MCF 10A (cell line): ENCODE measurements at regions of chr1 and their contacts with region 1.

Region 1: DNA sequence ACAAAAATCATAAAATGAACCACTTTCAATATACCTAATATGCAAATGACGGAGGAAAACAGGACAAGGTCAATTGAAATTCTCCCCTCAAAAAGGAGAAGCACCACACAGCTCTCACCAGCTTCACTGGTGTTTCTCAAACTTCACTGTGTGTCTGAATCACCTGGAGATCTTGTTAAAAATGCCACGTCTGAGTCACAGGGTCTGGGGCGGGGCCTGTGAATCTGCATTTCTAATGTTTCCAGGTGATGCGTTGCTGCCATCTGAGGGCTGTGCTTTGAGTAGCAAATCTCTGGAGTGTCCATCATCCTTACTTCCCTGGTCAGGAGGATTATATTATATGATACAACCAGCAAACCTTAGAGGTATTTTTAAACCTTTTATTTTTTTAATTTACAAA is 9.0 kb downstream of the CLDN19 start:
- DNase-seq: peak; percentile 62
- H3K4me3 Mint-ChIP-seq: no peak overlapping the region
- H3K27ac Mint-ChIP-seq: no peak overlapping the region
- H3K4me1 Mint-ChIP-seq: no peaks in the 10 kb centered on the region
- H3K27me3 Mint-ChIP-seq: no peaks in the 10 kb centered on the region
- CTCF ChIP-seq: peak; percentile 45

Region 2: GRCh38 chr1:42576935-42577334 is 154.1 kb before region 1 on chr1:
- CTCF ChIA-PET with region 1: interaction called, 3 read pairs
- POLR2A ChIA-PET with region 1: no interaction called
- intact Hi-C with region 1: loop called (anchors 1 kb)
- DNase-seq: no peak
- H3K4me3 Mint-ChIP-seq: no peak overlapping the region
- H3K27ac Mint-ChIP-seq: no peak overlapping the region
- H3K4me1 Mint-ChIP-seq: no peaks in the 10 kb centered on the region
- H3K27me3 Mint-ChIP-seq: no peaks in the 10 kb centered on the region
- CTCF ChIP-seq: no peak

Region 3: DNA sequence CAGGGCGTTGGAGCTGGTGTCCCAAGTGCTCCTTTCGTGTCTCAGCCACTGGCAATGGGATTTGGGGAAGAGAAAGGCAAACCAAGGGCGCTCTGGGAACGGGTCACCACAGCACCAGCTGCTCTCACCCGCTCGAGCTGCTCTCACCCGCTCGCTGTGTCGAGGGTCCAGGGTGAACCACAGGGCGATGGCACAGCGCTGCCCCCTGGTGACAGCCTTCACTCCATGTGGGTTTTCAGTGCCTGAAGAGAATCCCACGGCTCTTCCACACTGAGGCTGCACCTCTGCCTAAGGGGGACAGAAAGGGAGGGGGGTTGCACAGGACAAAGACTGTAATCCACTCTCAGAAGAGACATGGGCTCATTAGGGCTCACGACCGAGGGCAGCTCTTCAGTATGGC is 16.1 kb after region 1 on chr1:
- CTCF ChIA-PET with region 1: interaction called, 5 read pairs
- POLR2A ChIA-PET with region 1: interaction called, 10 read pairs
- intact Hi-C with region 1: no loop called
- DNase-seq: peak; percentile 35
- H3K4me3 Mint-ChIP-seq: no peak overlapping the region
- H3K27ac Mint-ChIP-seq: no peak overlapping the region
- H3K4me1 Mint-ChIP-seq: peaks cover 18% of the 10 kb centered on the region
- H3K27me3 Mint-ChIP-seq: no peaks in the 10 kb centered on the region
- CTCF ChIP-seq: peak; percentile 58